ENCODE measurements at regions of chr4 and their contacts with region 1.

Region 1: DNA sequence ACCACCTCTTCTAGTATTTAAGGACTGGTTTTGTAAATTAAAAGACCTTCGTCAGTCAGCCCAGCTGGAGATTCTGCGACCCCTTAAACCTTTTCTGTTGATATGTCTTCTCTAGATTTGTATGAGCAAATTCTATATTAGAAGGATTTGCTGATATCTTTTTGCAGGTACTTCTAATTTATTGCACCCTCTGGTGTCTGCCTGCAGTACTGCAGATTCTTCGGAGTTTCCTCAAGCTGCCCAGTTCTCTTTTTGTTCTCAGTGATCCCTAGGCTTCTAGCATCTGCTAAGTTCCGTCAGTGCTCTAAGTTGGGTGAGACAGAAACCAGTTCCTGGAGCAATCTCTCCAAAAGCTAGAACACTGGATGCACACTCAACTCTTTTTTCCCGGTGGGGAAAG is 545.2 kb downstream of the C4orf33 start:
- DNase-seq: peak in 3 of 4 donors; percentile 9 to 37 (median 32)
- ATAC-seq: peak; percentile 82
- H3K4me3 ChIP-seq: no peak overlapping the region
- H3K27ac ChIP-seq: no peak overlapping the region
- H3K4me1 ChIP-seq: no peaks in the 10 kb centered on the region
- H3K27me3 ChIP-seq: no peaks in the 10 kb centered on the region
- CTCF ChIP-seq: peak; percentile 74 to 83

Region 2: GRCh38 chr4:129362674-129363274 is 278.4 kb before region 1 on chr4:
- intact Hi-C with region 1: loop called in 1 of 2 experiments (anchors 10 kb)
- DNase-seq: peak in 2 of 4 donors; percentile 69 to 85
- ATAC-seq: peak; percentile 87
- H3K4me3 ChIP-seq: no peak overlapping the region
- H3K27ac ChIP-seq: no peak overlapping the region
- H3K4me1 ChIP-seq: no peaks in the 10 kb centered on the region
- H3K27me3 ChIP-seq: no peaks in the 10 kb centered on the region
- CTCF ChIP-seq: peak; percentile 76

Region 3: DNA sequence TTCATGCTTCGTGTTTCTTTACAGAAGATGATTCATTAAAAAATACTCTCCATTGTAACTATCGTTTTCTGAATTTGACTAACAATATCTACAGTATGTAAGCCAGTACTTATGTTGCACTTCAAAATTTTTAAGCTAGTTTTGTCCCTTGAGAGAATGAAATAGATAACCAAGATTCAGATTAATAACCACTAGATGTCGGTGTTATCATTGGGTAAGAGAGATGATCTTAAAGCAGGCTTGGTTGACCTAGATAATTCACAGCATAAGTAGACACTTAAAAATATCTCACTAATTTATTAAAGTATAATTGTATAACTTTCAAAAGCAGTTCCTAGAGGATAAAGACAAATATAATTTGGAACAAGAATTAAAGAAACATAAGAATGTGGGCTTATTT is 114.4 kb before region 1 on chr4:
- intact Hi-C with region 1: loop called in 1 of 2 experiments (anchors 10 kb)
- DNase-seq: no peak
- ATAC-seq: peak; percentile 69
- H3K4me3 ChIP-seq: no peak overlapping the region
- H3K27ac ChIP-seq: no peak overlapping the region
- H3K4me1 ChIP-seq: no peaks in the 10 kb centered on the region
- H3K27me3 ChIP-seq: no peaks in the 10 kb centered on the region
- CTCF ChIP-seq: peak; percentile 23 to 29